B cell (primary cell): ENCODE measurements at regions of chr12 and their contacts with region 1.

Region 1: GRCh38 chr12:9750276-9751203 is 10.2 kb downstream of the CD69 start:
- DNase-seq: peak; percentile 86
- ATAC-seq: peak; percentile 84
- H3K4me3 ChIP-seq: no peak overlapping the region
- H3K4me3 Mint-ChIP-seq: peak overlapping the region; percentile 20
- H3K27ac ChIP-seq: no peak overlapping the region
- H3K27ac Mint-ChIP-seq: no peak overlapping the region
- H3K4me1 ChIP-seq: peaks cover 7 to 13% of the 10 kb centered on the region in 2 donors
- H3K4me1 Mint-ChIP-seq: peaks cover 30% of the 10 kb centered on the region
- H3K27me3 ChIP-seq: no peaks in the 10 kb centered on the region
- H3K27me3 Mint-ChIP-seq: no peaks in the 10 kb centered on the region
- CTCF ChIP-seq: peak; percentile 91

Region 2: GRCh38 chr12:9331218-9331626 is 419.3 kb before region 1 on chr12:
- CTCF ChIA-PET with region 1: interaction called, 28 read pairs
- POLR2A ChIA-PET with region 1: no interaction called
- intact Hi-C with region 1: no loop called
- DNase-seq: peak; percentile 74
- ATAC-seq: peak; percentile 84
- H3K4me3 ChIP-seq: no peak overlapping the region
- H3K4me3 Mint-ChIP-seq: no peak overlapping the region
- H3K27ac ChIP-seq: no peak overlapping the region
- H3K27ac Mint-ChIP-seq: no peak overlapping the region
- H3K4me1 ChIP-seq: peaks cover 0 to 12% of the 10 kb centered on the region in 2 donors
- H3K4me1 Mint-ChIP-seq: peaks cover 7% of the 10 kb centered on the region
- H3K27me3 ChIP-seq: peaks cover 0 to 3% (median 0%) of the 10 kb centered on the region in 4 experiments
- H3K27me3 Mint-ChIP-seq: no peaks in the 10 kb centered on the region
- CTCF ChIP-seq: peak; percentile 98

Region 3: GRCh38 chr12:9667403-9668160 is 83.0 kb before region 1 on chr12:
- CTCF ChIA-PET with region 1: interaction called, 15 read pairs
- POLR2A ChIA-PET with region 1: no interaction called
- intact Hi-C with region 1: no loop called
- DNase-seq: peak; percentile 70
- ATAC-seq: peak; percentile 31
- H3K4me3 ChIP-seq: peak overlapping the region in 3 of 5 experiments; percentile 21 to 77 (median 25)
- H3K4me3 Mint-ChIP-seq: peak overlapping the region; percentile 78
- H3K27ac ChIP-seq: peak overlapping the region; percentile 76 to 87
- H3K27ac Mint-ChIP-seq: peak overlapping the region; percentile 90
- H3K4me1 ChIP-seq: peaks cover 46 to 56% of the 10 kb centered on the region in 2 donors
- H3K4me1 Mint-ChIP-seq: peaks cover 57% of the 10 kb centered on the region
- H3K27me3 ChIP-seq: no peaks in the 10 kb centered on the region
- H3K27me3 Mint-ChIP-seq: no peaks in the 10 kb centered on the region
- CTCF ChIP-seq: no peak

Region 4: DNA sequence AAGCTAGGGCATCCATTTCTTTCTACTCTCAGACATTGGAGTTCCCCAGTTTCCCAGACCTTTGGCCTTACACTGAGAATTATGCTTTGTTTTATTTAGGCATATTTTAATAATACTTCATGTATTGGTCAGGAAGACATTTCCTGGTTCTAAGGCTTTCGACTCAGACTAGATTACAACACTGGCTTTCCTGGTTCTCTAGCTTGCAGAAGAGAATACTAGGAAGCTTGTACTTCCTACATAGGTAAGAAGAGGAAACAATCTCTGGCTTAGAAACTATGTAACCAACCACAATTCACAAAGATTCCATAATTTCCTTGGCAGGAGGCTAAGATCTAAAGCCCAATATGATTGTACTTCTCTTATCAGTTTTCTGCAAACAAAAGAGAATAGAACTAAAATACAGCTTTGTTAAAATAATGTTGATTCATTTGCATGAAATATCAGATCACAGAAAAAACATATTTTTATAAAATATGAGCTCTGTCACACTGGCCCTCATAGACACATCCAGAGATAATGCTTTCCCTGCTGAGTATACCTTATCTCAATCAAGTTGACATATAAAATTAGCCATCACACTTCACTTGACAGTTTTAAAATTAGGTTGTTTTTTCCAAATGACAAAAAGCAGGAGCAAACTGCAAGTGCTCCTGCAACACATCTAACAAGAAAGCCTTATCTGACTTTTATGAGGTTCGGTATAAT is 50.5 kb before region 1 on chr12:
- CTCF ChIA-PET with region 1: interaction called, 26 read pairs
- POLR2A ChIA-PET with region 1: no interaction called
- intact Hi-C with region 1: no loop called
- DNase-seq: no peak
- ATAC-seq: no peak
- H3K4me3 ChIP-seq: no peak overlapping the region
- H3K4me3 Mint-ChIP-seq: no peak overlapping the region
- H3K27ac ChIP-seq: peak overlapping the region in 1 of 2 donors; percentile 71
- H3K27ac Mint-ChIP-seq: peak overlapping the region; percentile 71
- H3K4me1 ChIP-seq: peaks cover 38 to 42% of the 10 kb centered on the region in 2 donors
- H3K4me1 Mint-ChIP-seq: peaks cover 66% of the 10 kb centered on the region
- H3K27me3 ChIP-seq: no peaks in the 10 kb centered on the region
- H3K27me3 Mint-ChIP-seq: no peaks in the 10 kb centered on the region
- CTCF ChIP-seq: no peak

Region 5: GRCh38 chr12:9731797-9732196 is 18.7 kb before region 1 on chr12:
- CTCF ChIA-PET with region 1: interaction called, 40 read pairs
- POLR2A ChIA-PET with region 1: interaction called, 4 read pairs
- intact Hi-C with region 1: no loop called
- DNase-seq: peak; percentile 69
- ATAC-seq: peak; percentile 64
- H3K4me3 ChIP-seq: peak overlapping the region; percentile 35 to 74 (median 44)
- H3K4me3 Mint-ChIP-seq: peak overlapping the region; percentile 92
- H3K27ac ChIP-seq: peak overlapping the region; percentile 83 to 94
- H3K27ac Mint-ChIP-seq: peak overlapping the region; percentile 95
- H3K4me1 ChIP-seq: peaks cover 42 to 58% of the 10 kb centered on the region in 2 donors
- H3K4me1 Mint-ChIP-seq: peaks cover 68% of the 10 kb centered on the region
- H3K27me3 ChIP-seq: no peaks in the 10 kb centered on the region
- H3K27me3 Mint-ChIP-seq: no peaks in the 10 kb centered on the region
- CTCF ChIP-seq: no peak

Region 6: GRCh38 chr12:9797722-9798619 is 47.4 kb after region 1 on chr12:
- CTCF ChIA-PET with region 1: interaction called, 629 read pairs
- POLR2A ChIA-PET with region 1: interaction called, 3 read pairs
- intact Hi-C with region 1: loop called (anchors 1 kb)
- DNase-seq: peak; percentile 85
- ATAC-seq: peak; percentile 95
- H3K4me3 ChIP-seq: no peak overlapping the region
- H3K4me3 Mint-ChIP-seq: no peak overlapping the region
- H3K27ac ChIP-seq: no peak overlapping the region
- H3K27ac Mint-ChIP-seq: no peak overlapping the region
- H3K4me1 ChIP-seq: peaks cover 25 to 28% of the 10 kb centered on the region in 2 donors
- H3K4me1 Mint-ChIP-seq: peaks cover 34% of the 10 kb centered on the region
- H3K27me3 ChIP-seq: no peaks in the 10 kb centered on the region
- H3K27me3 Mint-ChIP-seq: no peaks in the 10 kb centered on the region
- CTCF ChIP-seq: peak; percentile 81

Region 7: GRCh38 chr12:9925708-9926393 is 175.3 kb after region 1 on chr12:
- CTCF ChIA-PET with region 1: interaction called, 81 read pairs
- POLR2A ChIA-PET with region 1: no interaction called
- intact Hi-C with region 1: loop called (anchors 1 kb)
- DNase-seq: peak; percentile 69
- ATAC-seq: peak; percentile 47
- H3K4me3 ChIP-seq: peak overlapping the region in 3 of 5 experiments; percentile 18 to 22 (median 21)
- H3K4me3 Mint-ChIP-seq: peak overlapping the region; percentile 56
- H3K27ac ChIP-seq: no peak overlapping the region
- H3K27ac Mint-ChIP-seq: no peak overlapping the region
- H3K4me1 ChIP-seq: no peaks in the 10 kb centered on the region
- H3K4me1 Mint-ChIP-seq: peaks cover 3% of the 10 kb centered on the region
- H3K27me3 ChIP-seq: peaks cover 0 to 4% (median 0%) of the 10 kb centered on the region in 4 experiments
- H3K27me3 Mint-ChIP-seq: peaks cover 21% of the 10 kb centered on the region
- CTCF ChIP-seq: peak; percentile 68